SK-N-SH (cell line): ENCODE measurements at regions of chr17 and their contacts with region 1.

Region 1: DNA sequence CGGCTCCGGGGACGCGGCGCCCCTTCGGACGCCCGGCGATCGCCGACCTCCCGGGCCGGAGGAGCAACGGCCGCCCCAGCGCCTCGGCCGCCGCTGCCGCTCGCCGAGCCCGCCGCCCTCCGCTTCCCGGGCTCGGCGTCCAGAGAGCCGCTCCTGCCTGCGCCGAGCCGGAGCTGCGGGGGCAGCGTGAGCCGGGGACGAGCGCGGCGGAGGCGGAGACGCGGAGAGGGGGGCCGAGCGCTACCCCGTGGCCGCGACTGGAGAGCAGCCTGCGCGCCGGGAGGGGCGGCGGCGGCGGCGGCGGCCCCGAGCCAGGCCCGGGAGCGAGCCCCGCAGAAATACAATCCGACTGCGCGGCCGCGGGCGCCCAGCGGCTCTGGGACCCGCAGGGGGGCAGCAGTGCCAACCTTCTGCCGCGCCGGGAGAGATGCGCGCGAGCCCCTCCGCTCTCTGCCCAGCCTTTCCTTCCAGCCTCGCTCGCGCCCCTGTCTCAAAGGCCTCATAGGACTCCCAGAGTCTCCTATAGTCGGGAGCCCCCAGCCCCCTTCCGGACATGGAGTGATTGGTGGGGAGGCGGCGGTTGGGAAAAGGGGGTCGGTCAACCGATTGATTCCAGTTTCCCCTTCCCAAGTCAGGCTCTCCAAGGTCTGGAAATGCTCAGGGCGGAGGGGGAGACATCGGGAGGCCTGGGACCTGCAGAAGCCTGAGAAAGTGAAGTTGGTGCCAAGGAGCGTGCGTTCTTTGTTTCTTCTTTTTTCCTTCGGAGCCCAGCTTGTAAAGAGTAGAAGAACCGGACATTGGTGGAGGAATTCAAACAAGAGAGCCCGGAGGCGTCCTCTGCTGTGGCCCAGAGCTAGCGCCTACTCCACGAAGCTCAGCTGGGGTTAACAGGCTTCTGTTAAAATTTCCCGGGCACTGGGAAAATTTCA is 1.1 kb upstream of the SDK2 start:
- DNase-seq: peak; percentile 90
- H3K4me3 ChIP-seq: peak overlapping the region in 1 of 2 experiments; percentile 35; a peak in 3 of 4 replicates
- H3K27ac ChIP-seq: no peak overlapping the region
- H3K4me1 ChIP-seq: peaks cover 0 to 21% of the 10 kb centered on the region in 2 experiments; a peak in 2 of 4 replicates
- H3K27me3 ChIP-seq: peaks cover 41% of the 10 kb centered on the region
- CTCF ChIP-seq: no peak
- EP300 ChIP-seq: no peak
- RAD21 ChIP-seq: no peak

Region 2: DNA sequence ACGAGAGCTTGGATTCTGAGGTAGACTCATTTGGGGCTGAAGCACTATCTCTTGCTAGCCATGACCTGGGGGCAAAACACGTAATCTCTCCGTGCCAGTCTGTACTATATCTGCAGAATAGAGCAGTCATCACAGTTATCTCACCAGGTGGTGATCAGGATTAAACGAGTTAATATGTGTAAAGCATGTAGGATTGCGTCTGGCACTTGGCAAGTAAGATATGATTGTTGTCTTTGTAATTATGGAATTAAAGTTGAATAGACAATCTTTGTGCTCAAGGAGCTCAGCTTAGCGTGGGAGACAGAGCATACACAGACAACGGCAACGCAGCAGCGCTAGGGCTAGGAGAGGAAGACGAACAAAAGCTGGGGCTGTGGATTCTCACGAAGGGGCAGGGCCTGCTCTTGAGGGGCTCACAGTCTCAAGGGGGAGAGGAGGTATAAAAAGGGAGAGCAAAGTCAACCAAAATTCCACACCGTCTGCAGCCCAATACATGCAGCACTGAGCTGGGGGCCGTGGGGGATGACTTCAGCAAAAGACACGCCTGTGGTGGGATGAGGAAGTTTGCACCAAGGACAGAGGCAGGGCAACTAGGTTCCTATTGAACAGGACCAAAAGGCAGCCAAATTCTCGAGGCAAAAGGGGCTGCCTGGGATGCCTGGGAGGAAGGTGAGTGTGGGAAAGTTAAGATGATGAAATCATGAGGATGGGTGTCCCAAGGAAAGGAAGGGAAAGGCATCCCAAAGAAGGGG is 69.7 kb before region 1 on chr17:
- CTCF ChIA-PET with region 1: no interaction called
- POLR2A ChIA-PET with region 1: no interaction called
- DNase-seq: peak; percentile 71
- H3K4me3 ChIP-seq: no peak overlapping the region
- H3K27ac ChIP-seq: no peak overlapping the region
- H3K4me1 ChIP-seq: peaks cover 0 to 11% of the 10 kb centered on the region in 2 experiments; a peak in 1 of 4 replicates
- H3K27me3 ChIP-seq: no peaks in the 10 kb centered on the region
- CTCF ChIP-seq: no peak
- EP300 ChIP-seq: peak in 1 of 2 experiments; percentile 55; a peak in 1 of 4 replicates
- RAD21 ChIP-seq: no peak

Region 3: DNA sequence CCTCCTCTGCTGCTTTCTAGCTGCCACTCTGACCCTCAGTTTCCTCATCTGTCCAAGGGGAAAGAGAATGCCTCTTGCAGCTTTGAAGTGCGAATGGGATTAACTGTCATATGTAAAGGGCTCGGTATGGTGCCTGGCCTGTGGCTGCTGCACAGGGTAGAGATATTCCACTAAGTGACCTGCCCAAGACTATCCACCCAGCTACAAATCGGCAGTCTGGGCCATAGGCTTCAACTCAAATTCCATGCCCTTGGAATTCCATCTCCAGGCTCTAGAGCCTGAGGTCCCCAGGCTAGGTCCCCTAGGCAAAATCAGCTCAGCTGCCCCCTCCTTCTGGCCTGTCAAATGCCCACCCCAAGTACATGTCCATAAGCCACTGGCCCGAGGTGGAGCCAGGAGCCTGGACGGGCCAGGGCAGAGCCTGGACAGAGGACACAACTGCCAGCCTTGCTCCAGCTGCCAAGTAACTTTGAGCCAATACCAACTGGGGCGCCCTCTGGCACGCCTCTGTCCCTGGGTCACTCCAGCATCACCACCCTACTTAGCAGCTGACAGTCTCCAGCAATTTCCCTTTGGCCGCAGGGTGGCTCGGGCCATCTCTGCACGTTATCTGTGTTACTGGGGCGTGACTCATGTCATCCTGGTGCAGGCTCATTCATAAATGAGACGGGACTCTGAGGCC is 58.3 kb before region 1 on chr17:
- CTCF ChIA-PET with region 1: interaction called, 56 read pairs
- POLR2A ChIA-PET with region 1: no interaction called
- DNase-seq: peak; percentile 90
- H3K4me3 ChIP-seq: no peak overlapping the region
- H3K27ac ChIP-seq: no peak overlapping the region
- H3K4me1 ChIP-seq: peaks cover 0 to 30% of the 10 kb centered on the region in 2 experiments; a peak in 2 of 4 replicates
- H3K27me3 ChIP-seq: no peaks in the 10 kb centered on the region
- CTCF ChIP-seq: no peak
- EP300 ChIP-seq: peak in 1 of 2 experiments; percentile 90; a peak in 2 of 4 replicates
- RAD21 ChIP-seq: peak; percentile 49; the same call in 1 of the 2 replicates

Region 4: GRCh38 chr17:73623818-73624217 is 21.5 kb before region 1 on chr17:
- CTCF ChIA-PET with region 1: interaction called, 11 read pairs
- POLR2A ChIA-PET with region 1: no interaction called
- DNase-seq: no peak
- H3K4me3 ChIP-seq: no peak overlapping the region
- H3K27ac ChIP-seq: no peak overlapping the region
- H3K4me1 ChIP-seq: peaks cover 0 to 2% of the 10 kb centered on the region in 2 experiments; a peak in 1 of 4 replicates
- H3K27me3 ChIP-seq: no peaks in the 10 kb centered on the region
- CTCF ChIP-seq: no peak
- EP300 ChIP-seq: no peak
- RAD21 ChIP-seq: no peak

Region 5: GRCh38 chr17:73703192-73703591 is 57.9 kb after region 1 on chr17:
- CTCF ChIA-PET with region 1: interaction called, 64 read pairs
- POLR2A ChIA-PET with region 1: no interaction called
- DNase-seq: peak; percentile 70
- H3K4me3 ChIP-seq: no peak overlapping the region
- H3K27ac ChIP-seq: no peak overlapping the region
- H3K4me1 ChIP-seq: peaks cover 0 to 20% of the 10 kb centered on the region in 2 experiments; a peak in 2 of 4 replicates
- H3K27me3 ChIP-seq: no peaks in the 10 kb centered on the region
- CTCF ChIP-seq: no peak
- EP300 ChIP-seq: no peak
- RAD21 ChIP-seq: no peak

Region 6: GRCh38 chr17:73719588-73720071 is 74.3 kb after region 1 on chr17:
- CTCF ChIA-PET with region 1: interaction called, 12 read pairs
- POLR2A ChIA-PET with region 1: no interaction called
- DNase-seq: peak; percentile 96
- H3K4me3 ChIP-seq: no peak overlapping the region
- H3K27ac ChIP-seq: peak overlapping the region in 1 of 2 experiments; percentile 95; a peak in 2 of 4 replicates
- H3K4me1 ChIP-seq: peaks cover 0 to 49% of the 10 kb centered on the region in 2 experiments; a peak in 1 of 4 replicates
- H3K27me3 ChIP-seq: no peaks in the 10 kb centered on the region
- CTCF ChIP-seq: no peak
- EP300 ChIP-seq: peak in 1 of 2 experiments; percentile 95; a peak in 2 of 4 replicates
- RAD21 ChIP-seq: peak; percentile 9

Region 7: DNA sequence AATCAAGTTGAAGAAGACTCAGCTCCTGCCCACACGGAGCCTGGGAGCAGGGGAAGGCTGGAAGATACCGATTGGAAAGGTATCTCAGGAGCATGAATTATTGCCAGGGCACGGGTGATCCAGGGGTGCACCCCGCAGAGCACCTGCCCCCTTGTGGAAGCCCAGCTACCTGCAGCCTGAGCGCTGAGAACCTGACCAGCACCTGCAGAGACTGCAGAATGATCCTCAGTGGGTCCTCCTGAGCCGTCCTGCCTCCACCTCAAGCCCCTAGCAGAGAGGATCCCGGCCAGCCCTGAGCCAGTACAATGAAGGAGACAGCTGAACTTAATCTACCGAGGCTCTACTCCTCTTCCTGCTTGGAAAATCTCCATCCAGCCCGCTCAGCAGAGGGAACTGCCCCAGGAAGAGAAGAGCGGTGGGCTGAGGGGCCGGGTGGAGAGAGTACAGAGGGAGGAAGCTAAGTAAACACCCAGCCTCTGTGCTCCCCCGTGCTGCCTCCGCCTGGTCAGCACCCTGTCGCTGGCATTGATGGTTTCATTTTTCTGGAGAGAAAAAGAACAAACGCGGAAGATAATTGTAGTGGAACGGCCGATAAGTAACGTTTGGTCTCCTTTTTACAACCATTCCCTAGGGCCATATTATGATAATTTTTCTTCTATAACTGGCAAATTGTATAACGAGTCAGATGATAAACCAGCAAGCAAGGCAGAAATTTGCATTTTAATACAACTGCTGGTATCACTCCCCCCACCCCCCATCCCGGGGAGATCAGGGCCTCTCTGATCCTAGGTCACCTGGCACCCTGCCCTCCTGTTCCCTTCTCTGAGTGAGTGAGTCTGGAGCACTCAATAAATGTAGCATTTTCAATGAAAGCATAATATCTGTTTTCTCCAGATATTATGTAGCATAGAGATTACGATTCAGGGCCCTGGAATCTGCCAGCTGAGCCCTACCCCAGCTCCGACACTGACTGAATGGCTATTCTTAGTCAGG is 353.6 kb after region 1 on chr17:
- CTCF ChIA-PET with region 1: interaction called, 36 read pairs
- POLR2A ChIA-PET with region 1: no interaction called
- DNase-seq: peak; percentile 82
- H3K4me3 ChIP-seq: peak overlapping the region in 1 of 2 experiments; percentile 23; a peak in 1 of 4 replicates
- H3K27ac ChIP-seq: no peak overlapping the region
- H3K4me1 ChIP-seq: no peaks in the 10 kb centered on the region; a peak in 1 of 4 replicates
- H3K27me3 ChIP-seq: no peaks in the 10 kb centered on the region
- CTCF ChIP-seq: peak; percentile 25; the same call in 1 of the 2 replicates
- EP300 ChIP-seq: no peak
- RAD21 ChIP-seq: peak; percentile 73

Region 8: DNA sequence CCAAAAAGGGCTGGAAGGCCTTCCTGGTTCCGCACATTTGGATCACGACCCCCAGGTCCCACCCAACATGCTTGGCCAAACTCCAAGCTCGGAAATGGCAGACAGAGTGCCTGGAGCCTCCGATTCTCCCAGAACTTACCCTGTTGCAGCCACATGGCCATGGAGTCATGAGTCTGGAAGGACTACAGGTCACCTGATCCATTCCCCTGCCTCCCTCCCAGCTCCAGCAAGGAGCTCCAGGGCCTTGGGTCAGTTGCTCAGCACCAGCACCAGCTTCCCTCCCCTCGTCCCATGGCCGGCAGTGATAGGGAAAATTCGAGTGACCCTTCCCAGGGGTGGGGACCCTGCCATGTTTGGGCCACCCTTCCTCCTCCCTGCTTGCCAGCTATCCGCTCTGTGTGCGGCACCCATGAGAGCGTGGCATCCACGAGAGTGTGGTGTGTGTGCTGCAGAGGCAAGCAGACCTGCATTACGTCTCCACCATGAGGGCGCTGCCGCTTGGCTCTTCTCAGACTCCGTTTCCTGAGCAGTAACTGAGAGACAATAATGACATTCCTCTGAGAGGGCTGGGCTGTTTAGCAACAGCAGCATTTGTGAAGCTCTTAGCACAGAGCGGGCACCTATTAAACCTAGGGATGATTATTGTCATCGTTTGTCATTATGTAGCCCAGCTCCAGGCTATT is 536.9 kb after region 1 on chr17:
- CTCF ChIA-PET with region 1: interaction called, 46 read pairs
- POLR2A ChIA-PET with region 1: no interaction called
- DNase-seq: no peak
- H3K4me3 ChIP-seq: no peak overlapping the region
- H3K27ac ChIP-seq: no peak overlapping the region
- H3K4me1 ChIP-seq: peaks cover 0 to 5% of the 10 kb centered on the region in 2 experiments; a peak in 1 of 4 replicates
- H3K27me3 ChIP-seq: no peaks in the 10 kb centered on the region
- CTCF ChIP-seq: no peak
- EP300 ChIP-seq: no peak
- RAD21 ChIP-seq: no peak